Naive thymus-derived CD4-positive, alpha-beta T cell (primary cell): ENCODE measurements at regions of chr3 and their contacts with region 1.

Region 1: DNA sequence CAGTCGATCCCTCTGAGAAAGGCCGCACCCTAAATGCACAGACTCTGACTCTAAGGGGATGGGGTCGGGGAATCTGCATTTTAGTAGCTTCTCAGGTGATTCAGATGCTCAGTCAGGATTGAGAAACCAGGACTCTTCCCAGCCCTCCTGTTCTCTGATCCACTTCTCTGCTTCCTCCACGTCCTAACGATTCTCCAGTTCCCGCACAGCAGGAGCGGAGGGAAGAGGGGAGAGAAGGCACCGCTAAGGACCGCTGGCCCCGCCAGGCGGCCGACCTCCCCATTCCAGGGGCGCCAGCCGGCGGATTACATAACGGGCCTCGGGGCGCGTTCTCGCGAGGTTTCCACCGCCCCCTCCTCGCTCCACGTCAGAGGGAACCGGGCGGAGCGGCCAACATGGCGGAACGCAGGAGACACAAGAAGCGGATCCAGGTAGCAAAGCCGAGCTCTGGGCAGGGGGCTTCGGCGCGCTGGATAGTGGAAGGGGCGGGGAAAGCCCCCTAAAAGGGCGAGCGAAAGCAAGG is at the start of gene SEC62:
- DNase-seq: peak; percentile 92 to 97 (median 96)
- ATAC-seq: peak; percentile 95
- H3K4me3 ChIP-seq: peak within 1 kb of the TSS; percentile 80
- H3K4me3 Mint-ChIP-seq: peak within 1 kb of the TSS; percentile 83 to 98 (median 96)
- H3K27ac ChIP-seq: peak within 1 kb of the TSS; percentile 95
- H3K27ac Mint-ChIP-seq: peak within 1 kb of the TSS; percentile 95 to 99 (median 99)
- H3K4me1 ChIP-seq: peaks cover 22 to 36% of the 10 kb centered on the region in 2 donors
- H3K4me1 Mint-ChIP-seq: peaks cover 37 to 81% (median 69%) of the 10 kb centered on the region in 7 donors
- H3K27me3 ChIP-seq: no peaks in the 10 kb centered on the region
- H3K27me3 Mint-ChIP-seq: peaks cover 0 to 2% (median 0%) of the 10 kb centered on the region in 5 donors
- total RNA-seq, gene SEC62: 75.2 to 156 (median 110) TPM

Region 2: GRCh38 chr3:169772897-169773828 is 193.3 kb before region 1 on chr3 and contains the start of gene MYNN:
- CTCF ChIA-PET with region 1: no interaction called
- POLR2A ChIA-PET with region 1: interaction called, 29 read pairs
- intact Hi-C with region 1: loop called (anchors 1 kb)
- DNase-seq: peak; percentile 87 to 95 (median 93)
- ATAC-seq: peak; percentile 90
- H3K4me3 ChIP-seq: peak within 1 kb of the TSS; percentile 87
- H3K4me3 Mint-ChIP-seq: peak within 1 kb of the TSS; percentile 91 to 99 (median 97)
- H3K27ac ChIP-seq: peak within 1 kb of the TSS; percentile 100
- H3K27ac Mint-ChIP-seq: peak within 1 kb of the TSS; percentile 96 to 100 (median 99)
- H3K4me1 ChIP-seq: peaks cover 15 to 22% of the 10 kb centered on the region in 2 donors
- H3K4me1 Mint-ChIP-seq: peaks cover 18 to 69% (median 56%) of the 10 kb centered on the region in 7 donors
- H3K27me3 ChIP-seq: no peaks in the 10 kb centered on the region
- H3K27me3 Mint-ChIP-seq: peaks cover 0 to 5% (median 0%) of the 10 kb centered on the region in 5 donors
- total RNA-seq, gene MYNN: 16.2 to 20.8 (median 19.0) TPM

Region 3: DNA sequence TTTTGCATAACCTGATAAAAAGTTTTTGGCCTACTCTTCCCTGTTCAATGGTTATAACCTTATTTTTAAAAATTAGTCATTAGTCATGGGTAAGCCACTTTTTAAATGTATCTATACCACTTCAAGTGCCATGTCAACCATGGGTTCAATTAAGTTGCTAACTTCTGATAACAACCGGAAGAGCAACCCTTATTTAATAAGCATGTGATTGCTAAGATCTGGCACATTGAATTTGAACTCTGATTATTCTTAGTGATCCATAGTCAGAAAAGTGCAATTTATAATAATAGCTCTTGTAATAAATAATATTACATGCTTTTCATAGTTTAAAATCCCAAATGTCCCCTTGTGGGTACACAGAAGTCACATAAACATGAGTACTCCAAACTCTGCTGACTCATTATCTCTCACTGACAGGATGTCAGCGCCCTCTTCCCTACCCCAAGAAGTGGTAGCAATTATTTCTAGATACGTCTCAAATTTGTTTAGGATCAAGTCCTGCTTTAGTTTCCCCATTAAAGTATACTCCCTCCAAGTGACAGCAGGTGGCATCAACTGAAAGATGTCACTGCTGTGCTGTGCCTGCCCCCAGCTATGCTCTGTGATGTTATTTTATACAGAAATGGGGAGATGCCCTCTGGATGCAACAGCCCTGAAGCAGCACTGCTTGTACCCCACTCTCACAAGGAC is 36.5 kb before region 1 on chr3:
- CTCF ChIA-PET with region 1: interaction called, 5 read pairs
- POLR2A ChIA-PET with region 1: interaction called, 7 read pairs
- intact Hi-C with region 1: loop called in 1 of 2 experiments (anchors 1 kb)
- DNase-seq: peak in 5 of 9 donors; percentile 7 to 24 (median 16)
- ATAC-seq: peak; percentile 68
- H3K4me3 ChIP-seq: no peak overlapping the region
- H3K4me3 Mint-ChIP-seq: no peak overlapping the region
- H3K27ac ChIP-seq: no peak overlapping the region
- H3K27ac Mint-ChIP-seq: no peak overlapping the region
- H3K4me1 ChIP-seq: no peaks in the 10 kb centered on the region
- H3K4me1 Mint-ChIP-seq: peaks cover 0 to 4% (median 0%) of the 10 kb centered on the region in 7 donors
- H3K27me3 ChIP-seq: no peaks in the 10 kb centered on the region
- H3K27me3 Mint-ChIP-seq: peaks cover 0 to 12% (median 4%) of the 10 kb centered on the region in 5 donors

Region 4: DNA sequence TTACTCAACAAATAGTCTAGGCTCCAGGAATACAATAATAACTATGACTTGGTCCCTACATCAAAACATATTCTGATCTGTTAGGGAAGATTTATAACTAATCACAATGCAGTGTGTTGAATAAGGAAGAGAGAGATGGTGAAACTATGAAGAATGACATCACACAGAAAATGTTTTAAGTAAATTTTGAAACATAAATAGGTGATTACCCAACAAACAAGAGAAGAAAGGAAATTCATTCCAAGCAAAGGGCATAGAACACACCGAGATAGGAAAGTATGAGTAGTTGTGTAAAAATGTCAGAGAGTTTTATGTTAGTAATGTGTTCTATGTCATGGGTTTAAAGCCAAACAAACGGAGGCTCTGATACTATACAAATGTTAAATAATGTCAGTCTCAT is 13.6 kb after region 1 on chr3:
- CTCF ChIA-PET with region 1: interaction called, 11 read pairs
- POLR2A ChIA-PET with region 1: interaction called, 30 read pairs
- intact Hi-C with region 1: no loop called
- DNase-seq: no peak
- ATAC-seq: no peak
- H3K4me3 ChIP-seq: no peak overlapping the region
- H3K4me3 Mint-ChIP-seq: no peak overlapping the region
- H3K27ac ChIP-seq: no peak overlapping the region
- H3K27ac Mint-ChIP-seq: peak overlapping the region in 6 of 9 donors; percentile 1 to 51 (median 10)
- H3K4me1 ChIP-seq: peaks cover 0 to 4% of the 10 kb centered on the region in 2 donors
- H3K4me1 Mint-ChIP-seq: peaks cover 4 to 26% (median 17%) of the 10 kb centered on the region in 7 donors
- H3K27me3 ChIP-seq: no peaks in the 10 kb centered on the region
- H3K27me3 Mint-ChIP-seq: no peaks in the 10 kb centered on the region

Region 5: DNA sequence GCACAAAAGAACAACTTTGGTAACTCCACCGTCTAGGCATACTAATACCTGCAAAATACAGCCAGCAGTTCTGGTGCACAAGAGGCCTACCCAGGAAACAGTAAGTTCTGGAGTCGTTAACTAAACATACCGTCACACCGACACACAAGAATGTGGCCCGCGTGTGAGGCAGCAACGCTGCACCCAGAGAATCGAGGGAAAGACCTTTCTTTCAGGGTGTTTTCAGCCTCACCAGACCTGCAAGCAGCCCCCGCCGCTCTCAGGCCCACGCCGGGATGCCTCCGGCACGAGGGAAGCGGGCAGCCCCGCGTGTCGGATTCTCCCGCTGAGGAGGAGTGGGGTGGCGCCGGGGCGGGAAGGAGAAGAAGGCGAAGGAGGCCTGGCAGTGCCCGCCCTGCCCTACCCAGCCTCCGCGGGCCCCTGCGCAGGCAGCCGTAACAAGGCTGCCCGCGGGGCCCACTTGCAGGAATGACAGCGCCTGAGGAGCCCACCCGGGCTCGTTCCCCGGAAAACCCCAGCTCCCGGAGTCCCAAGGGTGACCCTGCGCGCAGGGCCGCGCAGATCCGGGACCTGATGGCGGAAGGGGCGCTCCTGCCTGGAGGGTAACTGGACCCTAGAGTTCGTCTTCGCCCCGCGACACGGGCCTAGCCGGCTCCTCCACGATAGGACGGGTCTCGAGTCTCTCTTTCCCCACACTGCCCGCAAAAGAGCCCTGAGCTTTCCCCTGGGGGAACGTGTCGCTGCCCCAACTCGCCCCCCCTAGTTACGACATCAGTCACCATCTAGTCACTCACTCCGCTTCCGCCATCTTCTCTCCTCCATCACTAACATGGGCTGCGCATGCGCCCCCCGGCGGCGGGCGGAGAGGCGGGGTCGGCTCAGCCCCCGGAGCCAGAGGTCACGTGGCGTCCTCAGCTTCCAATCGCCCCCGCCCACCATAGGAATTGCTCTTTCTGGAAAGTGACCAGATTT is 214.7 kb after region 1 on chr3 and contains the start of gene PHC3:
- CTCF ChIA-PET with region 1: no interaction called
- POLR2A ChIA-PET with region 1: interaction called, 6 read pairs
- intact Hi-C with region 1: loop called (anchors 1 to 2 kb)
- DNase-seq: peak; percentile 88 to 95 (median 92)
- ATAC-seq: peak; percentile 86
- H3K4me3 ChIP-seq: peak within 1 kb of the TSS; percentile 93
- H3K4me3 Mint-ChIP-seq: peak within 1 kb of the TSS; percentile 88 to 100 (median 99)
- H3K27ac ChIP-seq: peak within 1 kb of the TSS; percentile 98
- H3K27ac Mint-ChIP-seq: peak within 1 kb of the TSS; percentile 96 to 100 (median 100)
- H3K4me1 ChIP-seq: peaks cover 19 to 39% of the 10 kb centered on the region in 2 donors
- H3K4me1 Mint-ChIP-seq: peaks cover 19 to 40% (median 33%) of the 10 kb centered on the region in 7 donors
- H3K27me3 ChIP-seq: no peaks in the 10 kb centered on the region
- H3K27me3 Mint-ChIP-seq: peaks cover 0 to 2% (median 0%) of the 10 kb centered on the region in 5 donors
- total RNA-seq, gene PHC3: 78.9 to 215 (median 158) TPM